Esophagus muscularis mucosa (tissue), 4 donors: ENCODE measurements at regions of chr5 and their contacts with region 1.

Region 1: DNA sequence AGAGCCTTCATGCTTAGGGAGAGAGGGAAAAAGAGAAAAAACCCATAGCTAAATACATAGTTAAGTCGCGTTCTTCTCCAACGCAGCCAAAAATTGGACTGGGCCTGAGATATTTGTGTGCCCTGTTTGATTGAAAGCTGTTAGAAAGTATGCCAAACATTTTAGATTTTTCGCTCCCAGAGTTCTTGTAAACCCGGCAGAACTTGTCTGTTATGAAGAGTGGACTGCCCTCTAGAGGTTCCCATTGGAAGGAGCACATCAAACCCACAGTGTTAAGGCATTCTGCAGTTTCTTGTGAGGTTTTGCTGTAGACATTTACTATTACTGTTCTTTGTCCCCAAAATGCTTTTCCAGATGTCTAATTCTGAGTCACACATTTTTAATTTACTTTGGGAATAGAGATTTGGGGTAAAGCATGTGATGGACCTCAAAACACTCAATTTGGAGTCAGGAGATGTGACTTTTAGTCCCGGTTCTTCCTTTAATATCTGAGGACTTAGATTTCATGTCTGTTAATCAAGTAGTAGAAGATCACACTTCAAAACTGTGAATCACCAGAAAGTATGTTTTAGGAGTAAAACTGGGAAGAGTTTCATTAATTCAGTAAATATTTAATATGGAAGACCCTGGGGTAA is 96.6 kb downstream of the PCSK1 start:
- DNase-seq: no peak
- H3K4me3 ChIP-seq: peak overlapping the region in 3 of 4 donors; percentile 5 to 30 (median 19)
- H3K27ac ChIP-seq: peak overlapping the region in 3 of 4 donors; percentile 9 to 56 (median 22)
- H3K4me1 ChIP-seq: peaks cover 24 to 56% (median 35%) of the 10 kb centered on the region in 4 donors
- H3K27me3 ChIP-seq: no peaks in the 10 kb centered on the region
- CTCF ChIP-seq: peak; percentile 82 to 90 (median 90)
- EP300 ChIP-seq: no peak
- POLR2A ChIP-seq: no peak

Region 2: GRCh38 chr5:95646554-95647431 is 689.7 kb before region 1 on chr5 and contains the start of gene RFESD:
- intact Hi-C with region 1: loop called (anchors 10 kb)
- DNase-seq: peak; percentile 100
- H3K4me3 ChIP-seq: peak within 1 kb of the TSS; percentile 56 to 70 (median 64)
- H3K27ac ChIP-seq: peak within 1 kb of the TSS; percentile 93 to 97 (median 96)
- H3K4me1 ChIP-seq: peaks cover 10 to 20% (median 18%) of the 10 kb centered on the region in 4 donors
- H3K27me3 ChIP-seq: no peaks in the 10 kb centered on the region
- CTCF ChIP-seq: peak in 1 of 3 experiments; percentile 13
- EP300 ChIP-seq: peak; percentile 99
- POLR2A ChIP-seq: peak; percentile 93
- total RNA-seq, gene RFESD: 0.63 to 1.7 (median 0.84) TPM

Region 3: GRCh38 chr5:95781101-95781583 is 555.3 kb before region 1 on chr5:
- intact Hi-C with region 1: loop called (anchors 10 kb)
- DNase-seq: peak; percentile 95
- H3K4me3 ChIP-seq: no peak overlapping the region
- H3K27ac ChIP-seq: peak overlapping the region; percentile 46 to 65 (median 59)
- H3K4me1 ChIP-seq: peaks cover 13 to 40% (median 24%) of the 10 kb centered on the region in 4 donors
- H3K27me3 ChIP-seq: no peaks in the 10 kb centered on the region
- CTCF ChIP-seq: peak; percentile 85 to 93 (median 85)
- EP300 ChIP-seq: no peak
- POLR2A ChIP-seq: no peak

Region 4: DNA sequence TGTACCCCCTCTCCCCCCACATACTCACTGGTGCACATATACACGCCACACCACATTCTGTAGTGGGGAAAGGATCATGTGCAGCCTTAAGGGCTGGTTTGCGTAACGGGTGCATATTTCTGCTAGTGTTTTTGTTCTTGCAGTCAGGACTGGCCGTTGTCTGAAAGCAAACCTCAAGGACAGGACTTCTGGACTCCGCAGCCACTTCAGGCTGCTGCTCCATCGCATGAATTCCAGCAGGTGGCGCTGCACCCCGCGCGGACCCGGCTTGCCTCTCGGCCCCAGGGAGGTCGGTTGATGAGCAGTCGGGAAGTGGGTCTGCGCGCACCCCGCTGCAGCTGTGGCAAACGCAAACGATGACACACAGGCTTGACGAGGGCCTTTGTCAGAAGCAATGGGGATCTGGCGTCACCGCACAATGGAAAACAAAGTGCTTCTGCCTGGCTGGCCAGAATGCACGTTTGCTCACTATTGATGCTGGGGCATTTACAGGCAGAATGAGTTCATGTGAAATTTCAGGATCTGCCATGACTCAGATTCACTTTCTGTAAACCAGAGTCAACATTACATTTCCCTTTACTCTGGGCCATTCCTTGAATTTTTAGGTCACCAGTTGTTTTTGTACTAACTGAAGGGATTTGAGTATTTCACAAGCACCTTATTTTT is 477.7 kb before region 1 on chr5:
- intact Hi-C with region 1: loop called (anchors 2 kb)
- DNase-seq: peak; percentile 98
- H3K4me3 ChIP-seq: peak overlapping the region; percentile 37 to 55 (median 44)
- H3K27ac ChIP-seq: peak overlapping the region; percentile 82 to 88 (median 84)
- H3K4me1 ChIP-seq: peaks cover 48 to 75% (median 59%) of the 10 kb centered on the region in 4 donors
- H3K27me3 ChIP-seq: no peaks in the 10 kb centered on the region
- CTCF ChIP-seq: peak in 2 of 3 experiments; percentile 98 to 99
- EP300 ChIP-seq: peak; percentile 82
- POLR2A ChIP-seq: no peak

Region 5: DNA sequence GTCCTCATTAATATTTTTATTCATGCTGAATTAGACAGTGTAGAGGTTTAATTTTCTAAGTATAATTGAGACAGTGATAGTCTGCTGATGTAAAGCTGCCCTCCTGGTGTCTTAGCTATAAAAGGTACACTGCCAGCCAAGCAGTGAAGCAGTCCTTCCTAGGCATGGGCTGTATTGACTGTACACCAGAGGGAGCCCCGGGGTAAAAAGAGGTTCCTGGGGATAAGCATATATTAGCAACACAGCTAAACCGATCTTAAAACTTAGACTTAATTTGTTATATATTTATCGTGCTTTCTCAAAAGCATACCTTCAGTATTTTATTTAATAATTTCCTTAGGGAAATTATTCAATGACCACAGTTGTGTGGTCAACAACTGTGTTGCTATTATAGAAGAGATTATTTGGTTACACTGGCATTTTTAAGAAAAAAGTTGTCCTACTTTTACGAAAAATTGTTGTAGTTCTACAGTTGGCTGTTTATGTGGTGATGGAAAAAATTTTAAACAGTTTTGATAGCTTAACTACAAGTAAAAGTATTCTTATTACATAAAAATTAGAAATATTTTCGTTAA is 443.6 kb before region 1 on chr5:
- intact Hi-C with region 1: loop called (anchors 10 kb)
- DNase-seq: no peak
- H3K4me3 ChIP-seq: no peak overlapping the region
- H3K27ac ChIP-seq: no peak overlapping the region
- H3K4me1 ChIP-seq: peaks cover 0 to 7% (median 4%) of the 10 kb centered on the region in 4 donors
- H3K27me3 ChIP-seq: no peaks in the 10 kb centered on the region
- CTCF ChIP-seq: peak; percentile 44 to 57 (median 51)
- EP300 ChIP-seq: no peak
- POLR2A ChIP-seq: no peak

Region 6: DNA sequence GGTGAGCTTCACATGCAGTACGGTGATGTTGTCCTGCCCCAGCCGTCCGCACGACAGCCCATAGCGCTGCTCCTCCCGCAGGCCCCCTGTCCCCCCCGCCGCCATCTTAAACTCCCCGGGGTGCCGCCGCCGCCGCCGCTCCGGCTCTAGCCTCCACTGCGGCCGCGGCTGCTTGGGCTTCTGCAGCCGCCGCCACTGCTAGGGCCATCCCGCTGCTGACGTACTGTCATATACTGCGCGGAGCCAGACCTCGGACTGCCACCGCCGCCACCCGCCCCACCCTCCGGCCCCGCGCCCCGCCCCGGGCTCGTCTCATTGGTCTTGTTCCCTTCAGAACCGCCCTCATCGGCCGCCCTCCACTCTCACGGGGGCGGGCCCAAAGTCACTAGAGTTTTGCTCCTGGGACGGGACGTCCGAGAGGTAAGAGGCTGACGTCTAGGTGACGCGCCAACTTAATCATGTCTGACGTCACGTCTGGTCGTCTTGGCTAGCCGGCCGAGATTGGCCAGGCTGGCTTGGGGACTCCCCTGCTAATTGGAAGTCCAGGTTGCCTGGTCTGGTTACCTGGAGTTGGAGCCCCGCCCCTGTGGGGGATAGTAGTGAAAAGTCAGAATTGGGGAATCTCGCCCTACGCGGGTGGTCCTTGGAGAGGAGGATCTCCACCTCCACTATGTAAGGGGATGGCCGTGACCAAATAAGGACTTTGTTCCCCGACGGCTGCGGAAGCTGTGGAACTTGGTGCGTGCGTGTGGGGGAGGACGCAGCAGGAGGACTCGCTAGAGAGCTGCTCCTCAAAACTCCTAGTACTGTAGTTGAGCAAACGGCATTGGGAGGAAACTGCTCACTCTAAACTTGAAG is 374.6 kb before region 1 on chr5 and contains the start of gene ELL2:
- intact Hi-C with region 1: loop called (anchors 2 kb)
- DNase-seq: peak; percentile 100
- H3K4me3 ChIP-seq: peak within 1 kb of the TSS; percentile 90 to 96 (median 94)
- H3K27ac ChIP-seq: peak within 1 kb of the TSS; percentile 98 to 100 (median 99)
- H3K4me1 ChIP-seq: peaks cover 0 to 41% (median 33%) of the 10 kb centered on the region in 4 donors
- H3K27me3 ChIP-seq: no peaks in the 10 kb centered on the region
- CTCF ChIP-seq: no peak
- EP300 ChIP-seq: peak; percentile 100
- POLR2A ChIP-seq: peak; percentile 87
- total RNA-seq, gene ELL2: 38.8 to 51.5 (median 42.7) TPM

Region 7: DNA sequence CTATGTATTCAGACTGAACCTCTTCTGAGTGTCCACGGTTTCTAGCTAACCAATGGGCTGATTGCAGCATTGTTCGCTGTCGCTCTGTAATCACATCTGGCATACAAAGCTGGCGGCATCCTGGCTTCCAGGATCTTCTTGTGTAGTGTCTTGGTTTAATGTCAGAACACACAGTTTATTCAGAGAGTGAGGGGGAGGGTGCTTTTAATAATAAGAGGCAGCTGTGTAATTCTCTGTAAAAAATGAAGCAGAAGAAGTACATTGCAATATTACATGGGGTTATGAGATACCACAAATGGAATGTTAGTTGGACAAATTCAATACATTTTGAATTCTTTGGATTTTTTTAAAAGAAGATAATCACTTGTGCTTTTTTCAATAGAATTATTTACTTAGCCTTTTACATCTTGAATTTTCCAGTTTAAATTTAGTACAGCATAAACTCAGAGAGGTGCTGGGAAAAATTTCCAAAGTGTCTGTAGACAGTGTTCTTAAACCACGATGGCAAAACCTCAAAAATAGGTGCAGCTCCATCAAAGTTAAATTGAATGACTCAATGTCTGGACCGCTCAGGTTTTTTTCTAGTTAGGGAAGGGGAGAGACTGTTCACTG is 109.4 kb before region 1 on chr5:
- intact Hi-C with region 1: loop called (anchors 10 kb)
- DNase-seq: no peak
- H3K4me3 ChIP-seq: peak overlapping the region in 2 of 4 donors; percentile 25 to 26
- H3K27ac ChIP-seq: peak overlapping the region; percentile 48 to 68 (median 49)
- H3K4me1 ChIP-seq: peaks cover 3 to 16% (median 13%) of the 10 kb centered on the region in 4 donors
- H3K27me3 ChIP-seq: no peaks in the 10 kb centered on the region
- CTCF ChIP-seq: no peak
- EP300 ChIP-seq: no peak
- POLR2A ChIP-seq: no peak

Region 8: GRCh38 chr5:96595300-96596090 is 259.0 kb after region 1 on chr5:
- intact Hi-C with region 1: no loop called
- DNase-seq: no peak
- H3K4me3 ChIP-seq: no peak overlapping the region
- H3K27ac ChIP-seq: no peak overlapping the region
- H3K4me1 ChIP-seq: no peaks in the 10 kb centered on the region
- H3K27me3 ChIP-seq: no peaks in the 10 kb centered on the region
- CTCF ChIP-seq: peak in 1 of 3 experiments; percentile 30
- EP300 ChIP-seq: no peak
- POLR2A ChIP-seq: no peak